Activated CD4-positive, alpha-beta memory T cell treated with anti-CD3 and anti-CD28 coated beads for 36 hours (primary cell): ENCODE measurements at regions of chr11 and their contacts with region 1.

Region 1: DNA sequence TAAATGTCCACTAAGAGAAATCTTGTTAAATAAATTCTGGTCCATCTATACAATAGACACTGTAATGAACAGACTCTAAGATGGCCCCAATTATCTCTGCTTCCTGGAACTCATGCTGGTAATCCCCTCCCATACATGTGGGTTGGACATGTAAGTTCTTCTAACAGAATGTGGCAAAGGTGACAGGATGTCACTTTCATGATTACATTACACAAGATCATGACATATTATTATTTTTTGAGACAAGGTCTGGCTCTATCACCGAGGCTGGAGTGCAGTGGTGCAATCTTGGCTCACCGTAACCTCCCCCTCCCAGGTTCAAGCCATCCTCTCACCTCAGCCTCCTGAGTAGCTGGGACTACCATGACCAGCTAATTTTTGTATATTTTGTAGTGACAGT is 14.6 kb upstream of the NDUFC2 start:
- DNase-seq: peak; percentile 22
- H3K4me3 Mint-ChIP-seq: no peak overlapping the region
- H3K27ac Mint-ChIP-seq: peak overlapping the region; percentile 83
- H3K4me1 Mint-ChIP-seq: peaks cover 9% of the 10 kb centered on the region
- H3K27me3 Mint-ChIP-seq: no peaks in the 10 kb centered on the region

Region 2: GRCh38 chr11:78061088-78061921 is 32.9 kb before region 1 on chr11:
- CTCF ChIA-PET with region 1: no interaction called
- POLR2A ChIA-PET with region 1: no interaction called
- intact Hi-C with region 1: no loop called
- DNase-seq: no peak
- H3K4me3 Mint-ChIP-seq: no peak overlapping the region
- H3K27ac Mint-ChIP-seq: no peak overlapping the region
- H3K4me1 Mint-ChIP-seq: no peaks in the 10 kb centered on the region
- H3K27me3 Mint-ChIP-seq: no peaks in the 10 kb centered on the region

Region 3: DNA sequence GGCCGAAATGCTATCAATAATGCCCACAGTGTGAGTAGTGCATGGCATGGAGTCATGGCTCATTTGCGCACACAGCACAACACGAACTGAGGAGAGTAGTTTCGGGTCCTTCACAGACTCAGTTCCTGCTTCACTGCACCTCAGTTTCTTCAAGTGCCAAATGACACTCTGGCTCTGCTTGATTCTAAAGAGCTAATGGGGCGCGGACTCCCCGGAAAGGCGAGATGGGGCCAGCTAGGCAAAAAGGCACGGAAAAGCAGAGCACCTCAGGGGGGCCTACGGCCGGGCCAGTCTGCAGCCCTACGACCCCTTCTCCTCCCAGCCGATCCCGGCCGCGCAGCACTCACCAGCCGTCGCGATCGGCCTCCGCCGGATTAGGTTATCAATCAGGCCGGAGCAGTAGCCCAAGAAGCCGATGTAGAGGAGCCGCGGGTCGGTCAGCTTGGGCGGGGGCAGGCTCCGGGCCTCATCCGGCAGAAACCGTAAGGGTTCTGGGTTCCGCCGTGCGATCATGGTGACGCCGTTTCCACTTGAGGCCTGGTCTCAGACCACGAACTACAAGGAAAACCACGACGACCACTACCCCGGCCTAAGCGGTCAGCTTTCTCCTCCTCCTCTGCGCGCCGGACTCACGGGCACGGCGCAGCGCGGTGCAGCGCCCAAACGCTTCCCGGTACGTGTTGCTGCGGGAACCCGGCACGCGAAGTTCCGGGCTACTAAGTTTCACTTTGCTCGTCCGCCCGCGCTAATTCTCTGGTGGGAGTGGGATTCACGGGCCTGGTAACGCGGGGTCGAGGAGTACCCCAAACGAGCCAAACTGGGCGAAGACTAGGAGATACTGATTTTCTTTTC is 14.8 kb before region 1 on chr11 and contains the start of gene NDUFC2:
- CTCF ChIA-PET with region 1: no interaction called
- POLR2A ChIA-PET with region 1: no interaction called
- intact Hi-C with region 1: loop called (anchors 2 kb)
- DNase-seq: peak; percentile 77
- H3K4me3 Mint-ChIP-seq: peak within 1 kb of the TSS; percentile 91
- H3K27ac Mint-ChIP-seq: peak within 1 kb of the TSS; percentile 83
- H3K4me1 Mint-ChIP-seq: peaks cover 40% of the 10 kb centered on the region
- H3K27me3 Mint-ChIP-seq: no peaks in the 10 kb centered on the region
- total RNA-seq, gene NDUFC2: 209 to 230 TPM